Activated CD4-positive, alpha-beta T cell treated with anti-CD3 and anti-CD28 coated beads for 36 hours (primary cell): ENCODE measurements at regions of chr9 and their contacts with region 1.

Region 1: DNA sequence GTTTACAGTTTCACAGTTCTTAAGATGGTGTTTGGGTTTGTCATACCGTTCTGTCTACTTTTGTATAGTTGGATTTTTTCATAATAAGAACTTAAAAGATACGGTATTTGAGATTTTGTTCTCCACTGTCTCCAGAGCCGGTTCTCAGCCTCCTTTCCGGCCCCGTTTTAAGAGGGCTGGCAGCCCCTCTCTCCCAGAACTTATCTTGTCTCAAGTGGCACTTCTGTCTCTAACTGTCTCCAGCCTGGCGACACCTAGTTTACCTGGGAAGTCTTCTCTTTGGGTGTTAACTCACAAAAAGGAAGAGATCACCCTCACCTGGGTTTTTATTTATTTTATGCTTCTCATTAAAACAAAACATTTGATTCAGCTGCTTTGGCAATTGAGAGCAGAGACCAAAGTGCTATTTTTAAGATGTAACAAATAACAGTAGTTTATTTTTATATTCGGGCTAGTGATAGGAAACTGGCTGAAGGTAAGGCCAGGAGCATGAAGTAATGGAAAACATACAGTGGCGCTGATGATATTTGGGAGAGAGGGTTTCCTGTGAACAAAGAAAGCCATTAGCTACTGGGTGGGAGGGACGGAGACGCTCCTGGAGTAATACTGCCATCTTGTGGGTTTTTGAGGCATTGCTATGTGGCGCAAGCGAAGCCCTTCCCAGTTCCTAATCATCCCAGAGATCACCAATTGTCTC is 48.3 kb downstream of the ACER2 start:
- DNase-seq: peak; percentile 76
- ATAC-seq: peak; percentile 92
- H3K4me3 Mint-ChIP-seq: no peak overlapping the region
- H3K27ac Mint-ChIP-seq: no peak overlapping the region
- H3K4me1 Mint-ChIP-seq: peaks cover 9% of the 10 kb centered on the region
- H3K27me3 Mint-ChIP-seq: no peaks in the 10 kb centered on the region

Region 2: GRCh38 chr9:17810728-17811571 is 1646.2 kb before region 1 on chr9:
- CTCF ChIA-PET with region 1: interaction called, 3 read pairs
- POLR2A ChIA-PET with region 1: no interaction called
- intact Hi-C with region 1: loop called in 1 of 2 experiments (anchors 10 kb)
- DNase-seq: peak; percentile 63
- ATAC-seq: no peak
- H3K4me3 Mint-ChIP-seq: no peak overlapping the region
- H3K27ac Mint-ChIP-seq: no peak overlapping the region
- H3K4me1 Mint-ChIP-seq: no peaks in the 10 kb centered on the region
- H3K27me3 Mint-ChIP-seq: no peaks in the 10 kb centered on the region

Region 3: GRCh38 chr9:18255158-18255629 is 1202.0 kb before region 1 on chr9:
- CTCF ChIA-PET with region 1: interaction called, 5 read pairs
- POLR2A ChIA-PET with region 1: no interaction called
- intact Hi-C with region 1: loop called (anchors 1 to 5 kb)
- DNase-seq: peak; percentile 87
- ATAC-seq: peak; percentile 77
- H3K4me3 Mint-ChIP-seq: no peak overlapping the region
- H3K27ac Mint-ChIP-seq: no peak overlapping the region
- H3K4me1 Mint-ChIP-seq: peaks cover 1% of the 10 kb centered on the region
- H3K27me3 Mint-ChIP-seq: peaks cover 18% of the 10 kb centered on the region

Region 4: GRCh38 chr9:19085295-19085694 is 371.8 kb before region 1 on chr9:
- CTCF ChIA-PET with region 1: interaction called, 9 read pairs
- POLR2A ChIA-PET with region 1: no interaction called
- intact Hi-C with region 1: loop called in 1 of 2 experiments (anchors 1 kb)
- DNase-seq: no peak
- ATAC-seq: peak; percentile 61
- H3K4me3 Mint-ChIP-seq: no peak overlapping the region
- H3K27ac Mint-ChIP-seq: no peak overlapping the region
- H3K4me1 Mint-ChIP-seq: no peaks in the 10 kb centered on the region
- H3K27me3 Mint-ChIP-seq: no peaks in the 10 kb centered on the region